ENCODE measurements at regions of chr6 and their contacts with region 1.

Region 1: GRCh38 chr6:35452186-35453090 is at the start of gene FANCE:
- DNase-seq: peak; percentile 59 to 91 (median 77)
- ATAC-seq: peak; percentile 74 to 77
- H3K4me3 Mint-ChIP-seq: peak within 1 kb of the TSS; percentile 82 to 92 (median 86)
- H3K27ac Mint-ChIP-seq: peak within 1 kb of the TSS; percentile 51 to 93 (median 82)
- H3K4me1 Mint-ChIP-seq: peaks cover 14 to 54% (median 40%) of the 10 kb centered on the region in 4 donors
- H3K27me3 Mint-ChIP-seq: no peaks in the 10 kb centered on the region
- polyA plus RNA-seq, gene FANCE: 3.2 to 5.5 (median 3.3) TPM

Region 2: GRCh38 chr6:35016502-35017321 is 435.7 kb before region 1 on chr6:
- POLR2A ChIA-PET with region 1: no interaction called
- DNase-seq: no peak
- ATAC-seq: no peak
- H3K4me3 Mint-ChIP-seq: no peak overlapping the region
- H3K27ac Mint-ChIP-seq: no peak overlapping the region
- H3K4me1 Mint-ChIP-seq: peaks cover 0 to 2% (median 0%) of the 10 kb centered on the region in 4 donors
- H3K27me3 Mint-ChIP-seq: no peaks in the 10 kb centered on the region

Region 3: GRCh38 chr6:35419417-35419816 is 33.0 kb before region 1 on chr6:
- POLR2A ChIA-PET with region 1: interaction called, 11 read pairs
- DNase-seq: peak in 4 of 10 donors; percentile 8 to 36 (median 20)
- ATAC-seq: peak; percentile 77 to 80
- H3K4me3 Mint-ChIP-seq: peak overlapping the region in 8 of 10 donors; percentile 6 to 67 (median 40)
- H3K27ac Mint-ChIP-seq: peak overlapping the region in 9 of 10 donors; percentile 67 to 88 (median 84)
- H3K4me1 Mint-ChIP-seq: peaks cover 23 to 50% (median 38%) of the 10 kb centered on the region in 4 donors
- H3K27me3 Mint-ChIP-seq: no peaks in the 10 kb centered on the region

Region 4: DNA sequence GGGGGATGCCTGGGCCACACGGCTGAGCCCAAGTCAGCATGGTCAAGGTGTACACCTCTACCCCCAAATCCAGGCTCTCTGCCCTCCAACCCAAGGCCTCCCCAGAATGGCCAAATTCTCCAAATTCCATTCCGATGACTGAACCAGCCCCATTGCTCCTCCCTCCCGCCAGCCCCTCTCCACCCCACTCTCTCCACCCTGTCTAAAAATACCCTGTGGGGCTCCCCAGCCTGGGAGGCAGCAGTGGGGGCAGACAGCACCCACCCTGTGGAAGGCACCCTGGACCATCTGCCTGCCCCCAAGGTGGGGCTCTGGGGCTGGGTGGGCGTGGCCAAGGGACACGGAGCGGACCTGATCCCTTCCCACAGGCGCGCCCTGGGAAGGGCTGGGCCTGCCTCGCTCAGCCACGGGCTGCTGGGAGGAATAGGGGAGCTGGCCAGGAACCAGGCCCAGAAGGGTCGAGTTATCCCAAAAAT is 33.0 kb after region 1 on chr6:
- POLR2A ChIA-PET with region 1: no interaction called
- DNase-seq: no peak
- ATAC-seq: no peak
- H3K4me3 Mint-ChIP-seq: no peak overlapping the region
- H3K27ac Mint-ChIP-seq: no peak overlapping the region
- H3K4me1 Mint-ChIP-seq: peaks cover 0 to 5% (median 3%) of the 10 kb centered on the region in 4 donors
- H3K27me3 Mint-ChIP-seq: no peaks in the 10 kb centered on the region